ENCODE measurements at regions of chr10 and their contacts with region 1.

Region 1: DNA sequence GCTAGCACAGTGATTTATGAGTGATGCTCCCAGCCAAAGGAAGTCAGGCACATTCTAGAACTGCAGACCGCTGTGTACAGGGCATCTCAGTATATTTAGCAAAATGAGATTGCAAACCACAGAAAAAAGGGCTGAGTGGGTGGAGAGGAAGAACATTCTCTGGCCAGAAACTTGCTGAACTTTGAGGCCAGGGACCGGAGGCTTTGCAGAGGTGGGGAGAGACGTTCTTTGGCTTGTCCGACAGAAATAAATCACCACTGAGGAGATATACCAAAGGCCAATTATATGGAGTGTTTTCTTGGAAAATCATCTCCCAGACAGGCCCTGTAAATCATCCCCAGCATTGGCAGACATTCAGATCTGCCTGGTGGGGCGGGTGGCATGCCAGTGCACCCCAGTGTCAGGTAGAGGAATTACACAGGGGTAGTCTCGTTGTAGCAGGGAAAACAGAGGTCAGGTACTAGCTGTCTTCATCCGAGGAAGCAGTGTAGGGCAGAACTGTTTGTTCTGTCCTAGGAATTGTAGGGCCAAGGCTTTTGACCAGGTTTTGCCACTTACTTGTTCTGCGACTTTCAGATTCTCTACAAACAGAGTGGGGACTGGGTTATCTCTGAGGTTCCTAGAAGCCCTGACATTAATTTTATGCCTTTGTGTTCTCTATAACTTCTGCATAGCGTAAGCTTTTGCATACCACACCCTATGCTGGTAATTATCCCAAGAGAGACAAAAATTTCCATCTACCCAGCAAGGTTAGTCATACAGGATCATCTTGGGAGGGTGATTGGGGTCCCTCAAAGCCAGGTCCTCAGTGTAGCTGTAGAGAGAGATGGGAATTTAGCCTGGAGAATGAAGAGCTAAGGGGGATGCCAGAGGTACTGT is 655.6 kb downstream of the LRMDA start:
- DNase-seq: peak; percentile 66
- ATAC-seq: peak; percentile 85

Region 2: GRCh38 chr10:74589226-74589673 is 1497.8 kb before region 1 on chr10:
- intact Hi-C with region 1: no loop called
- DNase-seq: peak; percentile 91
- ATAC-seq: peak; percentile 97

Region 3: GRCh38 chr10:76840802-76841201 is 753.8 kb after region 1 on chr10:
- intact Hi-C with region 1: loop called (anchors 10 kb)
- DNase-seq: no peak
- ATAC-seq: no peak

Region 4: GRCh38 chr10:77641788-77642397 is 1554.9 kb after region 1 on chr10:
- intact Hi-C with region 1: no loop called
- DNase-seq: peak; percentile 78
- ATAC-seq: peak; percentile 60